ENCODE measurements at regions of chr2 and their contacts with region 1.

Region 1: GRCh38 chr2:197198890-197199289 is 111.7 kb downstream of the ANKRD44 start:
- DNase-seq: peak; percentile 97
- H3K4me3 Mint-ChIP-seq: peak overlapping the region; percentile 84
- H3K27ac Mint-ChIP-seq: peak overlapping the region; percentile 99
- H3K4me1 Mint-ChIP-seq: peaks cover 65% of the 10 kb centered on the region
- H3K27me3 Mint-ChIP-seq: no peaks in the 10 kb centered on the region

Region 2: GRCh38 chr2:196361606-196362326 is 837.1 kb before region 1 on chr2:
- intact Hi-C with region 1: no loop called
- DNase-seq: no peak
- H3K4me3 Mint-ChIP-seq: no peak overlapping the region
- H3K27ac Mint-ChIP-seq: no peak overlapping the region
- H3K4me1 Mint-ChIP-seq: peaks cover 6% of the 10 kb centered on the region
- H3K27me3 Mint-ChIP-seq: peaks cover 11% of the 10 kb centered on the region

Region 3: GRCh38 chr2:197168705-197169104 is 30.2 kb before region 1 on chr2:
- intact Hi-C with region 1: no loop called
- DNase-seq: peak; percentile 88
- H3K4me3 Mint-ChIP-seq: no peak overlapping the region
- H3K27ac Mint-ChIP-seq: peak overlapping the region; percentile 46
- H3K4me1 Mint-ChIP-seq: peaks cover 32% of the 10 kb centered on the region
- H3K27me3 Mint-ChIP-seq: no peaks in the 10 kb centered on the region

Region 4: GRCh38 chr2:197209742-197210408 is 11.0 kb after region 1 on chr2:
- intact Hi-C with region 1: loop called (anchors 1 kb)
- DNase-seq: peak; percentile 87
- H3K4me3 Mint-ChIP-seq: peak overlapping the region; percentile 68
- H3K27ac Mint-ChIP-seq: peak overlapping the region; percentile 97
- H3K4me1 Mint-ChIP-seq: peaks cover 93% of the 10 kb centered on the region
- H3K27me3 Mint-ChIP-seq: no peaks in the 10 kb centered on the region

Region 5: GRCh38 chr2:197216361-197216979 is 17.6 kb after region 1 on chr2:
- intact Hi-C with region 1: loop called (anchors 2 kb)
- DNase-seq: peak; percentile 72
- H3K4me3 Mint-ChIP-seq: peak overlapping the region; percentile 80
- H3K27ac Mint-ChIP-seq: peak overlapping the region; percentile 93
- H3K4me1 Mint-ChIP-seq: peaks cover 71% of the 10 kb centered on the region
- H3K27me3 Mint-ChIP-seq: no peaks in the 10 kb centered on the region

Region 6: GRCh38 chr2:197239434-197239833 is 40.5 kb after region 1 on chr2:
- intact Hi-C with region 1: loop called (anchors 1 kb)
- DNase-seq: peak; percentile 73
- H3K4me3 Mint-ChIP-seq: peak overlapping the region; percentile 86
- H3K27ac Mint-ChIP-seq: peak overlapping the region; percentile 94
- H3K4me1 Mint-ChIP-seq: peaks cover 71% of the 10 kb centered on the region
- H3K27me3 Mint-ChIP-seq: no peaks in the 10 kb centered on the region

Region 7: DNA sequence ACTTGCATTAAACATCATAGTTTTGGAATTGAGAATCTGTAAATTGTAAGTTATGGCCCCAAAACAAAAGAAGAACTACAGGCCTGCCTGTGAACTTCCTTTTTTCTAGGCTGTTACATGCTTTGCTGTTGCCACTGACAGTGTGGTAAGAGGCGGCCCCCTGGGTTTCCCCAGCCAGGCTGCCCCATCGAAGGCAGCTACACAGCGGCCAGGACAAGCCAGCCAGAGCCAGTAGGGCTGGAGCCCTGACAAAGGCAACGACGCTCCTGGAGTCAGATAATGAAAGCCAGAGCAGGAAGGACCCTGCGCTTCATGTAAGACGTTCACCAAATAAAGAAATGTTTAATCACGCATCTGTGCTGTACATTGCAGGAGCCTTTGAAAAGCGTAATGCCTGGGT is 56.7 kb after region 1 on chr2:
- intact Hi-C with region 1: loop called (anchors 1 kb)
- DNase-seq: peak; percentile 94
- H3K4me3 Mint-ChIP-seq: peak overlapping the region; percentile 81
- H3K27ac Mint-ChIP-seq: peak overlapping the region; percentile 96
- H3K4me1 Mint-ChIP-seq: peaks cover 60% of the 10 kb centered on the region
- H3K27me3 Mint-ChIP-seq: no peaks in the 10 kb centered on the region

Region 8: DNA sequence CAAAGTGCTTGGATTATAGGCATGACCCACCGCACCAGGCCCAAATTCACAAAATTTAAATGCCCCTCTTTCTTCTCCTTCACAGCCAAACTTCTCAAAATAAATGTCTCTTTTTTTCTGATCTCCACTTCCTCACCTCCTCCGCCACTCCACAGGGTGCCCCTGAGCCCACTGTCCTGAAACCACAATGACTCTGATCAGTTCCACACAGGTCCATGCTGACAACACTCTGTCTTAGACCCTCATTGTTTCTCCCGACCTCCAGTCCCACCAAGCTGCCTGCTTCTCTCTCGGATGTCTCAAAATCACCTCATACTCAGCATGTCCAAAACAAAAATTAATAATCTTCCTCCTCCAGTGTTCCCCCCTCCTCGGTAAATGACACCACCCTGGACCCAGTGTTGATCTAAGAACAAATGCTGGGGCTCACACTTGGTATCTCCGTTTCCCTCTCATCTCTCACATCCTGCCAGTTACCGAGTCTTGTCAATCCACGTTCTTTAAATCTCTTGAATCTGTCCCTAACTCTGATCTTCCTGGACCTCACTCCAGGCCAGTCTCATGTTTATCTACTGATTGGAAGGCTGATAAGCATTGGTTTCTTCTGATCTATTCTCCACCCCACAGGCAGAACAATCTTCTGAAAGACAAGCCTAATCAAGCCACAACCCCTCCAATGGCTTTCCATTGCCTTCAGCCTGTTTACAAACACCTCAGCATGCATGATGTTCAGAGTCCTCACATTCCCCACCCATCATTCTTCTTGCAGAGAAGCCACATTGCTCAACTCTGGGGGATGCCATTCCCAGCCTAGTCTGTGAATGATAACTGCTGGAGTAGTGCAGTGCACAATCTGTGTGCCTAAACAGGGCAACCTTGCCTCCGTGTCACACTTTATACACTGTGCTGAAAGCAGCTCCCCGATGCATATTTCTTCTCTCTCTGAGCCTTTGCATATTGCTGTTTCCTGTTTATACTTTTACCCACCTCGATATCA is 124.1 kb after region 1 on chr2:
- intact Hi-C with region 1: loop called (anchors 1 kb)
- DNase-seq: peak; percentile 77
- H3K4me3 Mint-ChIP-seq: peak overlapping the region; percentile 82
- H3K27ac Mint-ChIP-seq: peak overlapping the region; percentile 96
- H3K4me1 Mint-ChIP-seq: peaks cover 53% of the 10 kb centered on the region
- H3K27me3 Mint-ChIP-seq: no peaks in the 10 kb centered on the region